ENCODE measurements at regions of chrX and their contacts with region 1.

Region 1: DNA sequence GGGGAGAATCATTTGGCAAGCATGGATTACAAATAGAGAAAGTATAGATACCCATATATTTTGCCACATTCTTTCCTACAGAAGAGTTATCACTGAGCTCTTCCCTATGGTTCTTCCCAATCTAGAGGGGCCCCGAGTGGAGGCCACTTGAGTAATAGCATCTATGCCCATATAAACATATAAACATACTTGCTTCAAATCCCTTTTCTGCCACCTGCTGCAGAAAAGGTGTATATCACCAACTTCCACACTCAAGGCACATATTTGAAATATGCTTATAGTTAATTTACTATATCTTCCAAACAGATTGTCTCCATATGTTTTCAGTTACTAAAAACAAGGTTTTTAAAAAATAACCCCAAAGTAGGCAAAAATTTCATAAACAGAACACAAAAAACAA is 642.8 kb upstream of the DIPK2B start:
- DNase-seq: peak; percentile 25 to 65 (median 59)
- H3K4me3 ChIP-seq: no peak overlapping the region
- H3K27ac ChIP-seq: no peak overlapping the region
- H3K4me1 ChIP-seq: peaks cover 0 to 18% (median 1%) of the 10 kb centered on the region in 4 experiments
- H3K27me3 ChIP-seq: peaks cover 0 to 9% (median 0%) of the 10 kb centered on the region in 5 experiments

Region 2: DNA sequence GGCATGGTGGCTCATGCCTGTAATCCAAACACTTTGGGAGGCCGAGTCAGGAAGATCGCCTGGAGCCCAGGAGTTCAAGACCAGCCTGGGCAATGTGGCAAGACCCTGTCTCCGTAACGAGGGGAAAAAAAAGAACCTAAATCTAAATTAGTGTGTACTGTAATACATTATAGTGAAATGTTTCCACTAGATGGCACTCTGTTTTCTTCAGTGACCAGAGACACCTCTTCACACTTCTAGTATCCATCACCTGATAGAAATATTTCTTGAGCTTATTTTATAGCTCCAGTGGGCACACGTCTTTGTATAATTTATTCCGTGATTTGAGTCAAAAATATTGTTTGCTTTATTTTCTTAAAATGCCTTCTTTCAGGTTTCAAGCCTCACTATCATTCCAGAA is 42.0 kb before region 1 on chrX:
- CTCF ChIA-PET with region 1: interaction called, 16 read pairs
- POLR2A ChIA-PET with region 1: no interaction called
- DNase-seq: peak in 2 of 3 donors; percentile 55 to 60
- H3K4me3 ChIP-seq: no peak overlapping the region
- H3K27ac ChIP-seq: no peak overlapping the region
- H3K4me1 ChIP-seq: peaks cover 3 to 43% (median 10%) of the 10 kb centered on the region in 4 experiments
- H3K27me3 ChIP-seq: peaks cover 0 to 15% (median 0%) of the 10 kb centered on the region in 5 experiments

Region 3: DNA sequence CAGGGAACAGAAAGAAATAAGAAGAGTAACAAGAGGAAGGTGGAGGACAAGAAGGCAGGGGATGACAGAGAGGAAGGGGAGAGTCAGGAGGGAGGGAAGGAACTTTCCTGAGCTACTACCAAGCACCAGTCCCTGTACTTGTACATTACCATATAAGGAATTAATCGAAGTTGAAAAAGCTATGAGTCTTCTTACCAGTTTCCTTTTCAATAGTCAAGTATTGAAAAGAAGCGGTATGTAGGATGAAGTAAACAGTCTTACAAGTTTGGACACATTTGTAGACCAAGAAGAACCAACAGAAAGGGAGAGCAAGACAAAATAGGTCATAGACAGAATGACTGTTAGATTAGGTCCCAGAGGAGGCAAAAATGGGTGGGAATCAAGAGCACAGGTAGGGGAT is 13.2 kb before region 1 on chrX:
- CTCF ChIA-PET with region 1: interaction called, 12 read pairs
- POLR2A ChIA-PET with region 1: no interaction called
- DNase-seq: no peak
- H3K4me3 ChIP-seq: no peak overlapping the region
- H3K27ac ChIP-seq: no peak overlapping the region
- H3K4me1 ChIP-seq: no peaks in the 10 kb centered on the region
- H3K27me3 ChIP-seq: peaks cover 0 to 23% (median 0%) of the 10 kb centered on the region in 5 experiments

Region 4: GRCh38 chrX:45992402-45993123 is 149.0 kb after region 1 on chrX:
- CTCF ChIA-PET with region 1: no interaction called
- POLR2A ChIA-PET with region 1: no interaction called
- DNase-seq: no peak
- H3K4me3 ChIP-seq: no peak overlapping the region
- H3K27ac ChIP-seq: no peak overlapping the region
- H3K4me1 ChIP-seq: no peaks in the 10 kb centered on the region
- H3K27me3 ChIP-seq: peaks cover 0 to 2% (median 0%) of the 10 kb centered on the region in 5 experiments

Region 5: GRCh38 chrX:46376246-46376885 is 532.8 kb after region 1 on chrX:
- CTCF ChIA-PET with region 1: interaction called, 12 read pairs
- POLR2A ChIA-PET with region 1: no interaction called
- DNase-seq: peak; percentile 49 to 75 (median 73)
- H3K4me3 ChIP-seq: no peak overlapping the region
- H3K27ac ChIP-seq: no peak overlapping the region
- H3K4me1 ChIP-seq: peaks cover 3 to 6% (median 4%) of the 10 kb centered on the region in 4 experiments
- H3K27me3 ChIP-seq: peaks cover 0 to 4% (median 0%) of the 10 kb centered on the region in 5 experiments